Calu3 (cell line): ENCODE measurements at regions of chr12 and their contacts with region 1.

Region 1: DNA sequence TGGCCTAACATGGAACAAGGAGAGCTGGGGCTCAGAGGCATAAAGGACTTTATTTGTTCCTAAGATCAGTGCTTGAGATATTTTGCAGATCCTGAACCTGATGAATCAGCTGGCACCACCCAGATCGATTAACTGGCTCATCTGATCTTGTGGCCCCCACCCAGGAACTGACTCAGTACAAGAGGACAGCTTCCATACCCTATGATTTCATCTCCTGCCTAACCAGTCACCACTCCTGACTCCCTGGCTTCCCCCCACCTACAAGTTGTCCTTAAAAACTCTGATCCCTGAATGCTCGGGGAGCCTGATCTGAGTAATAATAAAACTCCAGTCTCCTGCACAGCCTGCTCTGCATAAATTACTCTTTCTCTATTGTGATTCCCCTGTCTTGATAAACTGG is 5.1 kb downstream of the C12orf56 start:
- DNase-seq: peak; percentile 69
- H3K4me3 Mint-ChIP-seq: peak overlapping the region; percentile 26
- H3K27ac Mint-ChIP-seq: peak overlapping the region; percentile 63
- H3K4me1 Mint-ChIP-seq: peaks cover 37% of the 10 kb centered on the region
- H3K27me3 Mint-ChIP-seq: no peaks in the 10 kb centered on the region
- CTCF ChIP-seq: no peak

Region 2: GRCh38 chr12:63836936-63837335 is 548.5 kb before region 1 on chr12:
- CTCF ChIA-PET with region 1: no interaction called
- intact Hi-C with region 1: loop called (anchors 5 kb)
- DNase-seq: no peak
- H3K4me3 Mint-ChIP-seq: no peak overlapping the region
- H3K27ac Mint-ChIP-seq: no peak overlapping the region
- H3K4me1 Mint-ChIP-seq: no peaks in the 10 kb centered on the region
- H3K27me3 Mint-ChIP-seq: no peaks in the 10 kb centered on the region
- CTCF ChIP-seq: no peak